Lower leg skin (tissue), 4 donors: ENCODE measurements at regions of chr2 and their contacts with region 1.

Region 1: GRCh38 chr2:100262555-100263320 is 59.6 kb downstream of the LONRF2 start:
- DNase-seq: peak in 1 of 2 donors; percentile 90
- H3K4me3 ChIP-seq: no peak overlapping the region
- CTCF ChIP-seq: peak in 1 of 3 donors; percentile 89
- POLR2A ChIP-seq: no peak

Region 2: GRCh38 chr2:100038019-100038418 is 224.7 kb before region 1 on chr2:
- intact Hi-C with region 1: no loop called
- DNase-seq: no peak
- H3K4me3 ChIP-seq: no peak overlapping the region
- CTCF ChIP-seq: no peak
- POLR2A ChIP-seq: no peak

Region 3: DNA sequence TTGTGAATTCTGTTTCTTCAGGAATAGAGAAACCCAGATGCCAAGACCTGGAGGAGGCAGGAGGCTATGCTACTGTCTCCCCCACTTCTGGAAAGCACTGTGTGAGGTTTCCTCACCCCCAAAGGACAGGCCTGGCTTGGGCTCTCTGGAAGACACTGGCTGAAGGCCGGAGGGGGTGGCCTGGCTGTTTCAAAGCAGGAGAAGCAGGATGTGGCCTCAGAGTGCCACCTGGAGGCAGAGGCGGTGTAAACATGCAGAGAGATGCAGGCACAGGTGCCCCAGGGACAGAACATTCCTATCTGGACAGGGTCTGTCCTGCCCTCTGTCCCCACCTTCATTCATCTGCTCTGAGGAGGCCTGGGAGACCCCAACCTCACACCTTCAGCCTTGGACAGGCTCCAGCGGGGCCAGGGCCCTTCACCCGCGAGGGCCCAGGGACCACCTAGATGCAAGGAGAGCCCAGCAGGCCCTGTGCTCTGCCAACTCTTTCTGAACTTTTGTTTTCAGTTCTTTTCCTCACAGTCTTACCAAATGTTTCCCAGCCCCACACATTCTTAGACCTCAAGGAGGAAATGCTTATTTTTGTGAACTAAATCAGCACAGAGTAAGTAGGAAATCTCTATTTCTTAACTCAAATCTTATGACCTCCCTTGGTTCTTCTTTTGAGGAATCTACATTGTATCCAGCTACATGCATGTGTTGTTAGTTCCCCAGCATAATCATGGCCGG is 19.7 kb before region 1 on chr2:
- intact Hi-C with region 1: no loop called
- DNase-seq: peak in 1 of 2 donors; percentile 90
- H3K4me3 ChIP-seq: no peak overlapping the region
- CTCF ChIP-seq: no peak
- POLR2A ChIP-seq: no peak

Region 4: GRCh38 chr2:100381240-100381639 is 118.5 kb after region 1 on chr2:
- intact Hi-C with region 1: loop called (anchors 5 kb)
- DNase-seq: peak; percentile 65 to 93
- H3K4me3 ChIP-seq: no peak overlapping the region
- CTCF ChIP-seq: peak in 1 of 3 donors; percentile 52
- POLR2A ChIP-seq: no peak